Prostate gland (tissue), 2 donors: ENCODE measurements at regions of chr1 and their contacts with region 1.

Region 1: DNA sequence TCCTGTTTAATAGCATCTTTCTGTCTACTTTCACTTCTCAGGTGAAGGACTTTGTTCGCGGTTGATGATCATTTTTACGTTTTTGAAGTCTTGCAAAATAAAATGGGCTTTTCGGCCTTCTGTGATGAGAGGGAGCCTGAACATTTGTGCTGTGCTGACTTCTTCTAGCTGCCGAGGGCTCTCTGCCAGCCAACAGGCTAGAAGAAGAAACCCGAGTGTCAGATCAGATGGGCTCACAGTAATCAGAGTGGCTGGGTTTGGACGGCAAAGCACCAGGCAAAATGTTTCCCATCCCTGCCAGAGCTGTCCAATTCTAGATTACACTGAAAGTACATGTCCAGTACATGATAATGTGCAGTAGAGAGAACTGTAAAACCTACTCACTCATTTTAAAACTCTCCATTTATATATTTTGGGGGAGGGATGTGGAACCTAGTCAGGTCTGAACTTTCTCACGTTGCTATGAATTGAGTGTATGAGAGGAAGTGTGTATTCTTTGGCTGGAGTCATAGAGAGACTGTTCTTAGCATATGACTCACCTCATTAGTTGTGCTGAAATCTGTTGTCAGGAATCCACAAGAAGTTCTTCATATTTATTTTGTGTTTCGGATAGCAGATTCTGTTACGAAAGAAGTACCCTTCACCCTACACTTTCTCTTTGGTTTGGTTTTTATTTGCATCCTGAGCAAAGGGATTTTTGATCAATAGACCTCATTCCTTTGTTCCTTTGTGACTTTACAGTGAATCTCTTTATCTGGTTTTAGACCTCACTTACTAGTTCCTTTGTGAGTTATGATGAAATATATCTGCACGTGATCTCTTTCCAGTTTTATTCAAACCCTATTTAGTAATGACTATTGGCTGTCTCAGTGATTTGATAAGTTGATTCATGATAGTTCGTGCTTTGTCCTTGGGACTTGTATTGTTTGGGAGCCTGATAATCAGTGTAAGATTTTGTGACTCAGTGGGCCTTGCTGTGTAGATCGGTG is 4.8 kb downstream of the ATP1A1 start:
- DNase-seq: peak; percentile 61
- H3K4me3 ChIP-seq: peak overlapping the region in 1 of 2 donors; percentile 99
- H3K27ac ChIP-seq: peak overlapping the region; percentile 96 to 98
- H3K4me1 ChIP-seq: peaks cover 8% of the 10 kb centered on the region
- H3K27me3 ChIP-seq: no peaks in the 10 kb centered on the region
- CTCF ChIP-seq: no peak
- POLR2A ChIP-seq: no peak

Region 2: DNA sequence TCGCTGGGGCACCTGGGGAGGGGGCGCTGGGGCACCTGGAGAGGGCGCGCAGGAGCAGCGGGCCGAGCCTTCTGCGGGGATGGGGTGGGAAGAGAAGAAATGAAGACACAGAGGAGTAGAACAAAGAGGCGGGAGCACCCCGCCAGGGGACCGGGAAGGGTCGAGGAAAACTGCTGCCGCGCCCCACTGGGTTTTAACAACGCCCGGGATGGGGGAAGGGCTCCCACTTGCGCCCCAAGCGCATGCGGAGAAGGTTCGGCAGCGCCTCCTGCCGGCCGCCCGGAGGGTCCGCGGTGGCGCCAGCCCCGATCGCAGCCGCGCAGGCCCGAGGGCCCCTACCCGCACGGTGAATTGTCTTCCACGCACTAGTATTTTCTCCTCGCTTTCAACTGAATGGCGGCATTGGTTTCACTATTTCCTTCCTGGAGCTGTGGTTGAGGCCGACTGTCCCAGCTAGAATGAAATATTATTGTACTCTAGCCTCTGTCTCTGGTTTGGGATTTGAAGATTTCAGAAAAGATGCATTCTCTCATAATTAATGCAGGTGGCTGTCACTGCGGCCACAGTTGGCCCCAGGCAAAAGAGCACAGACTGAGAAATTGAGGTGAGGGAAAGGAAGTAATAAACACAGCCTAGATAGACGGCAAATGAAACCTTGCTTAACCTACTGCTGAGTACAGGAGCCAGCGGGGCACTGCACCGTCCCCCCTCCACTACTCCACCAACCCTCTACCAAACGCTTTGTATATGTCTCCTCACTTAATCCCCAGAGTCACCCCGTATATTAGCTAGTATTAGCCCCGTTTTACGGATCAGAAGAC is 209.3 kb before region 1 on chr1:
- intact Hi-C with region 1: loop called (anchors 5 kb)
- DNase-seq: peak; percentile 62
- H3K4me3 ChIP-seq: peak overlapping the region; percentile 47 to 50
- H3K27ac ChIP-seq: peak overlapping the region; percentile 63 to 66
- H3K4me1 ChIP-seq: peaks cover 2% of the 10 kb centered on the region
- H3K27me3 ChIP-seq: no peaks in the 10 kb centered on the region
- CTCF ChIP-seq: peak; percentile 72 to 91 (median 88)
- POLR2A ChIP-seq: no peak

Region 3: GRCh38 chr1:116405241-116406135 is 27.7 kb after region 1 on chr1:
- intact Hi-C with region 1: loop called (anchors 2 kb)
- DNase-seq: peak; percentile 40
- H3K4me3 ChIP-seq: no peak overlapping the region
- H3K27ac ChIP-seq: peak overlapping the region; percentile 13 to 32
- H3K4me1 ChIP-seq: no peaks in the 10 kb centered on the region
- H3K27me3 ChIP-seq: no peaks in the 10 kb centered on the region
- CTCF ChIP-seq: no peak
- POLR2A ChIP-seq: no peak

Region 4: DNA sequence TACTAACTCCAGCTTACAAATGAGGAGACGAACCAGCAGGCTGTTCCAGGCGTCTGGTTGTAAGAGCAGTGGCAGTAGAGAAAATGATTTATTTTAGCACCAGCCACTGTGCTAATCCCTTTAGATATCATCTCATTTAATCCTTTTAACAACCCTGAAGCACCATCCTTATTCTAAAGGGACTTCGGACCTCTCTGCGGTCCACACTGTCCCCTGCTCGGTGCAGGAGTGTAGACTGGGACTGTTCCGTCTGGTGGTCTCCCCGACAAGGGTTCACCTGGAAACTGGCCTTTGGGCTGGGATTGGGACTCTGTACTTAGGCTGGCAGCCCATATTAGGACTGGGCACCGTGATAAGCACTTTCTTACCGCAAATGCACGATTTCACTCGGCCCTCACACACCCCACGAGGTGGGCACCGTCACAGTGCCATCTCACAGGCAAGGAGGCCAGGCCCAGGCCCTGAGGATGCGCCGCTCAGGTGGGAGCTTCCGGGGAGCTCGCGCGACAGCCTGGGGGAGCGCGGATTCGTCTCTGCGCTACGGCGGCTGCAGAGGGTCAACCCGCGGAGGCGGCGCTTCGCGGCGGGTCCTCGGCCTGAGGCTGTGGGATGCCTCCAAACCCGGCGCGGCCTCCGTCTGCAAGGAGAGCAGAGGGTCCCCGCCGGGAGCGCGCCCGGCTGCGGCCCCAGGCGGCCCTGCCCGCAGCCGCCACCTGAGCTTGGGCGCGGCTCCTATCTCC is 40.4 kb after region 1 on chr1:
- intact Hi-C with region 1: loop called (anchors 5 kb)
- DNase-seq: peak; percentile 76
- H3K4me3 ChIP-seq: peak overlapping the region; percentile 64 to 78
- H3K27ac ChIP-seq: peak overlapping the region; percentile 58 to 77
- H3K4me1 ChIP-seq: no peaks in the 10 kb centered on the region
- H3K27me3 ChIP-seq: no peaks in the 10 kb centered on the region
- CTCF ChIP-seq: peak in 3 of 4 experiments; percentile 12 to 21 (median 14)
- POLR2A ChIP-seq: peak; percentile 36